Endothelial cell of umbilical vein (primary cell): ENCODE measurements at regions of chr2 and their contacts with region 1.

Region 1: DNA sequence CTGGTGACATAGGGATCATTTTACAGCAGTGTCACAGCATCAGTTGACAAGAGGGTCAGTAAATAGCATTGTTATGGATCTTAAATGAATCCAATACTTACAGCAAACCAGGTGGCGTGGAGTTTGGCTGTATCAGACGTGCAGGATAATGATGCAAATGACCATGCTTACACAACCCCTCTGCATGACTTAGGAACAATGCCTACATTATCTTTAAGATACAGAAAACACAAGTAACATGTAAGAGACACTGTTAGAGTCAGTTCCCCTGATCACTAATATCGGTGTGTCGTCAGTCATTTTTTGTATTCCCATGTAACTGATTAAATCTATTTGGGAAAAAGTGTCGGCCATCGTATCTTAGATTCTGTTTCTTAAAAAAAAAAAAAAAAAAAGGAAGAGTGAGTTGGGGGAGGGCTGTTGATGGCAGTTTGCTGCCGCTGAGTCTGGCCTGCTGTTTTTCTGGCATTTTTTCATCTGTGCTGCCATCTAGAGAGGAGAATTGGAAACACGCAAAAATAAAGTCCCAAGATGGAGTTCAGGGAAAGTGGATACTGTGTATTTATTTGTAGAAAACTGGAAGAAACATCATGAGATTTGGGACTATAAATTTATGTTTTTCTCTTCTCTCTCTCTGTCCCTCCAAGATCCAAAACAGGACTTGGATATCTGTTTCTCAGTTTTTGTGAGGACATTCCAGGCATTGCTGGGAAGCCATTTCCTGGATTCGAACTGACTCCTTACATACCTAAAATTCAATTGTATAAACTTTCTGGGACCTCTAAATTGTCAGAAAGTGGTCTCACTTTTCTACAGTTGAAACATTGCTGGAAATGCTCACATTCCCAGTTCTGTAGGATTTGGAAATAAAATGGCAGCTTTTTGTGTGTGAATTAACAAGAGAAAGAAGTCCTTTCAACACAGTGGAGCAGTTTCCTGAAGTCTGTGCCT is 60.3 kb upstream of the AGPS start:
- DNase-seq: peak; percentile 87
- H3K4me3 ChIP-seq: no peak overlapping the region
- H3K27ac ChIP-seq: peak overlapping the region; percentile 32
- H3K4me1 ChIP-seq: peaks cover 24% of the 10 kb centered on the region
- H3K27me3 ChIP-seq: no peaks in the 10 kb centered on the region
- CTCF ChIP-seq: peak; percentile 51 to 64
- POLR2A ChIP-seq: peak; percentile 25

Region 2: GRCh38 chr2:177212106-177212890 is 120.0 kb before region 1 on chr2 and contains the start of gene HNRNPA3:
- CTCF ChIA-PET with region 1: no interaction called
- POLR2A ChIA-PET with region 1: no interaction called
- dilution Hi-C with region 1: no loop called
- intact Hi-C with region 1: loop called (anchors 1 kb)
- DNase-seq: peak; percentile 100
- H3K4me3 ChIP-seq: peak within 1 kb of the TSS; percentile 99 to 100 (median 100)
- H3K27ac ChIP-seq: peak within 1 kb of the TSS; percentile 100
- H3K4me1 ChIP-seq: peaks cover 33% of the 10 kb centered on the region
- H3K27me3 ChIP-seq: no peaks in the 10 kb centered on the region
- CTCF ChIP-seq: peak in 1 of 2 donors; percentile 2
- POLR2A ChIP-seq: peak; percentile 97
- total RNA-seq, gene HNRNPA3: 316 and 322 TPM in 2 replicates

Region 3: GRCh38 chr2:177392373-177393202 is 60.3 kb after region 1 on chr2 and contains the start of gene AGPS:
- CTCF ChIA-PET with region 1: interaction called, 16 read pairs
- POLR2A ChIA-PET with region 1: interaction called, 3 read pairs
- dilution Hi-C with region 1: no loop called
- intact Hi-C with region 1: no loop called
- DNase-seq: peak; percentile 72
- H3K4me3 ChIP-seq: peak within 1 kb of the TSS; percentile 56 to 99 (median 96)
- H3K27ac ChIP-seq: peak within 1 kb of the TSS; percentile 91
- H3K4me1 ChIP-seq: peaks cover 49% of the 10 kb centered on the region
- H3K27me3 ChIP-seq: no peaks in the 10 kb centered on the region
- CTCF ChIP-seq: no peak
- POLR2A ChIP-seq: peak; percentile 85
- total RNA-seq, gene AGPS: 88.8 and 96.5 TPM in 2 replicates

Region 4: GRCh38 chr2:177467646-177468045 is 135.3 kb after region 1 on chr2:
- CTCF ChIA-PET with region 1: no interaction called
- POLR2A ChIA-PET with region 1: no interaction called
- dilution Hi-C with region 1: no loop called
- intact Hi-C with region 1: loop called (anchors 5 kb)
- DNase-seq: peak; percentile 53
- H3K4me3 ChIP-seq: no peak overlapping the region
- H3K27ac ChIP-seq: peak overlapping the region; percentile 50
- H3K4me1 ChIP-seq: peaks cover 15% of the 10 kb centered on the region
- H3K27me3 ChIP-seq: no peaks in the 10 kb centered on the region
- CTCF ChIP-seq: no peak
- POLR2A ChIP-seq: no peak

Region 5: DNA sequence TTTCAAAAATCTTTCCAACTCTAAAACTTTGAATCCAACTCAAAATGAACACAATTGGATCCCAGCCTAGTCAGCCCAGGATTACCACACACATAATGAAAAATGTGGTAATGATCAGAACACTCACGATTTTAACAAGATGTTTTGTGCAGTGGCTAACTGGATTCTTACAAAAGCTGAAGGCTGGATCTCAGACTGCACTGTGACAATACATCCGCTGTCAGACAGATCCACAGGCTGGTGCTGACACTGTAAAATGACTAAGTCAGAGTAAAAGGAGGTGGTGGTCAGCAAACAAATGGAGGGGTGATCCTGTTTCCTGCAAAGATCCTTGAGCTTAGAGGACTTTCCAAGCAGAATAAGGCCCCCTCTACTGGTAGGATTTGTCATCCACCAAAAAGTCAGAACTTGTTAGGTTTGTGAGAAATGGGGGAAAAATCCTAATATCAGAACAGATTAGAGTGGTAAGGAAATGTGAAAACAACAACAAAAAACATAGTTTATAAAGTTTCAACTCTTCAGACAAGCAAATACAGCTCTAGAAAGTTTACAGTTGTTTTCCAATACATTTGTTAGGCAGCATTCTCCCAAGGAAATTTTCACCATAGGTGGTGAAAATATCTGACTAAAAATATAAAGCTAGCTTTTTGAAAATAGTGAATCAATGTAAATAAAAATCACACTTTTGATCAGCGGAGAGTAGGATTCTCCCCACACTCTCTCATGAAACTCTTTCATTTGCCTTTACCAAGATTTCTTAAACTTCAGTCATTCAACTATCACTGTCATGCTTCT is 272.2 kb after region 1 on chr2:
- CTCF ChIA-PET with region 1: interaction called, 32 read pairs
- POLR2A ChIA-PET with region 1: no interaction called
- dilution Hi-C with region 1: no loop called
- intact Hi-C with region 1: loop called (anchors 1 kb)
- DNase-seq: peak; percentile 71
- H3K4me3 ChIP-seq: no peak overlapping the region
- H3K27ac ChIP-seq: no peak overlapping the region
- H3K4me1 ChIP-seq: no peaks in the 10 kb centered on the region
- H3K27me3 ChIP-seq: no peaks in the 10 kb centered on the region
- CTCF ChIP-seq: peak; percentile 56 to 70
- POLR2A ChIP-seq: no peak